ENCODE measurements at regions of chr1 and their contacts with region 1.

Region 1: DNA sequence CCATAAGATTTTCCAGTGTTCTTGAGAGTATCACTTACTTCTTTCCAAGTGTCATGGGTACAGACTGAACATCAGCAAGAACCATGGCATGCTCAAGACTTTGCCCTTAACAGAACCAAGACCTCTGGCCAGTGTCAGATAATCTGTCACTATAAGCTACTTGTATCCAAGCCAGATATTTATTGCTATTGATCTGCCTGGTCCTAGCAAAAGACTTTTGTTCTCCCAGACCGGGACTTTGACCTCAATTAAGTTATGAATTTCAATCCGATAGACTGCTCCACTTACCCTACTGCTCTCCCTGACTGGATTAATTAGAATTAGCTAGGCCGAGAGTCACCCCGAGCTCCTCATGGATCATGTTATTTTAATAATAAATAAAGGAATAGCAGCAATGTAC is 129.6 kb downstream of the ACBD6 start:
- H3K4me3 Mint-ChIP-seq: no peak overlapping the region
- H3K27ac Mint-ChIP-seq: no peak overlapping the region
- H3K4me1 Mint-ChIP-seq: no peaks in the 10 kb centered on the region
- H3K27me3 Mint-ChIP-seq: no peaks in the 10 kb centered on the region

Region 2: DNA sequence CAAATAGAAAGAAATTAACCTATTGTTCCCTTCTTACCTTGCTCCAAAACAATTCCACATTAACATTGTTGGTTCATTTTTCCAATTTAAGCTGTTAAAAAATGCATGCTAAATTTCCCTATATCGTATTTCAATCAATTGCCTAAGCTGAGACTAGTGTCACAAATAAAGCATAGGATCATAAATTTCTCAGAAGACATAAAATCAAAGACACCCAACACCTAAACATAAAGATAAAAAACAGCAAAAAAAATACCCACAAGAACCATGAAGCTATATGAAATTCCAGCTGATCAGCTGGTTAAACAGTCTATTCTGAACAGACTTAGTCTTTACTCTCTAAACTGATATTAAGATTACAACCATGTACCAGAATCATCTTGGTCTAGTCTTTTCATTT is 97.3 kb after region 1 on chr1:
- intact Hi-C with region 1: loop called (anchors 10 kb)
- H3K4me3 Mint-ChIP-seq: no peak overlapping the region
- H3K27ac Mint-ChIP-seq: no peak overlapping the region
- H3K4me1 Mint-ChIP-seq: no peaks in the 10 kb centered on the region
- H3K27me3 Mint-ChIP-seq: no peaks in the 10 kb centered on the region

Measured in dendritic cell treated with granulocyte-macrophage colony-stimulating factor and Interleukin-4, amounts not matched to agents 40 ng/mL and 50 ng/mL, for 4 days (primary cell).